ENCODE measurements at regions of chr18 and their contacts with region 1.

Region 1: GRCh38 chr18:55494899-55495298 is 93.1 kb downstream of the TCF4 start:
- DNase-seq: no peak
- H3K4me3 ChIP-seq: no peak overlapping the region
- H3K27ac ChIP-seq: no peak overlapping the region
- H3K4me1 ChIP-seq: peaks cover 50% of the 10 kb centered on the region
- H3K27me3 ChIP-seq: no peaks in the 10 kb centered on the region
- CTCF ChIP-seq: no peak

Region 2: GRCh38 chr18:55275039-55275901 is 219.6 kb before region 1 on chr18:
- CTCF ChIA-PET with region 1: no interaction called
- POLR2A ChIA-PET with region 1: no interaction called
- intact Hi-C with region 1: no loop called
- DNase-seq: peak; percentile 60
- H3K4me3 ChIP-seq: no peak overlapping the region
- H3K27ac ChIP-seq: no peak overlapping the region
- H3K4me1 ChIP-seq: peaks cover 8% of the 10 kb centered on the region
- H3K27me3 ChIP-seq: no peaks in the 10 kb centered on the region
- CTCF ChIP-seq: peak; percentile 62

Region 3: GRCh38 chr18:55422456-55423180 is 72.3 kb before region 1 on chr18:
- CTCF ChIA-PET with region 1: no interaction called
- POLR2A ChIA-PET with region 1: no interaction called
- intact Hi-C with region 1: loop called (anchors 5 kb)
- DNase-seq: peak; percentile 65
- H3K4me3 ChIP-seq: peak overlapping the region; percentile 47
- H3K27ac ChIP-seq: peak overlapping the region; percentile 78
- H3K4me1 ChIP-seq: peaks cover 63% of the 10 kb centered on the region
- H3K27me3 ChIP-seq: no peaks in the 10 kb centered on the region
- CTCF ChIP-seq: no peak

Measured in A673 (cell line).